Activated naive CD4-positive, alpha-beta T cell treated with anti-CD3 and anti-CD28 coated beads, Interleukin-2, amount 10 ng/mL, durations not matched to agents 7 days and 5 days (primary cell): ENCODE measurements at regions of chr6 and their contacts with region 1.

Region 1: DNA sequence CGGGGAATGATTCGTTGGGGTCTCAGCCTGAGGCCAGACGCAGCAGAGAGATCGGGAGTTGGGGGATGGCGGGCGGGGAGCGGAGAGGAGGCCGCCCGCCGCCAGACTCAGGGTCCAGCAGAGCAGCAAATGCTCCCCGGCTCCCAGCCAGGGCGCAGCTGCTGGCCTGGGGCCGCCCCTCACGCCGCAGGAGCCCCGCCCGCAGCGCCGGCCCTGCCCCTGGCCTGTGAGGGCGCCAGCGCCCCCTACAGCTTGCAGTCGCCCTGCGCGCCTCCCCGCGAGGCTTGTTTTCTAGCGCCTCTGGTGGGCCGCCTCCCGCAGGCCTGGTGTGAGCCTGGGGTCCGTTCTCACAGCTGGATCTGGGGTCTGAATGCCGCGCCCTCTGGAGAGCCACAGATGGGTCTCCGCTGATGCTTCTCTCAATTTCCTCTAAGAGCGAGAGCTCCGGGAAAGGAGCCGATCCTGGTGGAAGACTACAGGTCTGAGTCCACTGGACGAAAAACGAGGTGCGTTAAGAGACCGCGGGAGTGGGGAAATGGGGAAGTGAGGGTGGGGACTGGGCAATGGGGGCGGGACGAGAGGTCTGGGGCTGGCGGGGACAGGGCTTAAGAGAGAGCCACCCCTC is 29.9 kb downstream of the TRIM38 start:
- DNase-seq: peak; percentile 94
- H3K4me3 Mint-ChIP-seq: peak overlapping the region; percentile 83
- H3K27ac Mint-ChIP-seq: peak overlapping the region; percentile 88
- H3K4me1 Mint-ChIP-seq: peaks cover 27% of the 10 kb centered on the region
- H3K27me3 Mint-ChIP-seq: no peaks in the 10 kb centered on the region

Region 2: DNA sequence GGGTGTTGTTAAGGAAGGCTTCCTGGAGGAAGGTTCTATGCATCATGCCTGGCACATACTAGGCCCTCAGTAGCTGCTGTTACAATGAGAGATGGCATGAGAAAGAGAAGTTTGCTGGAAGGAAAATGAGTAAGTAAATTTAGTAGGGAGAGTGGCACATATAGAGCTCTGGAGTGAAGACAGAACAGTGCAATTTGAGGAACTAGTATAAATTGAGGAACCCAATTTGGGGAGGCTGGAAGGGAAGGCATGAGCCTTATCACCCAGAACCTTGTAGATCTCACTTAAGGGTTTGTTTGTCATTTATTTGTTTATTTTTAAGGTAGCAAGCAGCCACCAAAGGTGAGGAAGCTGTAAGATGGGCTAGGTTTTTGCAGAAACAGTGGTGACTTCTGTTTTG is 427.6 kb before region 1 on chr6:
- CTCF ChIA-PET with region 1: no interaction called
- DNase-seq: no peak
- H3K4me3 Mint-ChIP-seq: no peak overlapping the region
- H3K27ac Mint-ChIP-seq: no peak overlapping the region
- H3K4me1 Mint-ChIP-seq: no peaks in the 10 kb centered on the region
- H3K27me3 Mint-ChIP-seq: no peaks in the 10 kb centered on the region

Region 3: GRCh38 chr6:25788305-25788922 is 204.1 kb before region 1 on chr6:
- CTCF ChIA-PET with region 1: interaction called, 26 read pairs
- DNase-seq: peak; percentile 63
- H3K4me3 Mint-ChIP-seq: no peak overlapping the region
- H3K27ac Mint-ChIP-seq: no peak overlapping the region
- H3K4me1 Mint-ChIP-seq: no peaks in the 10 kb centered on the region
- H3K27me3 Mint-ChIP-seq: peaks cover 5% of the 10 kb centered on the region

Region 4: GRCh38 chr6:25966711-25967110 is 25.8 kb before region 1 on chr6:
- CTCF ChIA-PET with region 1: interaction called, 13 read pairs
- DNase-seq: no peak
- H3K4me3 Mint-ChIP-seq: peak overlapping the region; percentile 61
- H3K27ac Mint-ChIP-seq: no peak overlapping the region
- H3K4me1 Mint-ChIP-seq: peaks cover 72% of the 10 kb centered on the region
- H3K27me3 Mint-ChIP-seq: no peaks in the 10 kb centered on the region

Region 5: GRCh38 chr6:25981568-25982263 is 10.8 kb before region 1 on chr6:
- CTCF ChIA-PET with region 1: interaction called, 11 read pairs
- DNase-seq: no peak
- H3K4me3 Mint-ChIP-seq: no peak overlapping the region
- H3K27ac Mint-ChIP-seq: no peak overlapping the region
- H3K4me1 Mint-ChIP-seq: no peaks in the 10 kb centered on the region
- H3K27me3 Mint-ChIP-seq: no peaks in the 10 kb centered on the region

Region 6: DNA sequence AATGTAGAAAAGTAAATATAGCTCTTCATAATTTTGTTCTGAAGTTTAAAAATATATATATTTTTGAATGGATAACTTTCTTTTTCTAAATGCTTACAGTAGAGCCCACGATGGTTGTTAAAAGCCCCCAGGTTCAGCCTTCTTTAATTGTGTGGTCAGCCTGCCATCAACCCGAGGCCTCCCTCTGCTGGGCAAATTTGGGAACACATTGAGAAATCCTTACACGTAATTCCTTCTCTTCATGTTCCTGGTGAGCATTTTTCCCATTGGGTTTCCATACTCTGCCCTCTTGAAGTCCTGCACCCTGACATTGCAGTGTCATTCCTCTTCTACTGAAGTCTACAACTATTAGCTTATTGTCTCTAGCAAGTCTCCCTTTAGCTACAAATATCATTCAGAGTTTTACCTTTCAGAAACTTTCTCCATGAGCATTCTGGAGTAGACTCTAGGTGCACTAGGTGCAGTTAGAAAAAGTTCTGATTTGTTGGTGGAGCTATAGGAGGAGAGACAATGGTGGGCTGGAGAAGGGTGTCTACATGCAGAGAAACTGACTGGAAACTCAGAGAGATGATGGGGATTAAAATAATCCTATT is 10.7 kb after region 1 on chr6:
- CTCF ChIA-PET with region 1: interaction called, 79 read pairs
- DNase-seq: peak; percentile 65
- H3K4me3 Mint-ChIP-seq: no peak overlapping the region
- H3K27ac Mint-ChIP-seq: no peak overlapping the region
- H3K4me1 Mint-ChIP-seq: peaks cover 9% of the 10 kb centered on the region
- H3K27me3 Mint-ChIP-seq: no peaks in the 10 kb centered on the region

Region 7: GRCh38 chr6:26012061-26012460 is 19.5 kb after region 1 on chr6:
- CTCF ChIA-PET with region 1: interaction called, 79 read pairs
- DNase-seq: no peak
- H3K4me3 Mint-ChIP-seq: no peak overlapping the region
- H3K27ac Mint-ChIP-seq: no peak overlapping the region
- H3K4me1 Mint-ChIP-seq: peaks cover 5% of the 10 kb centered on the region
- H3K27me3 Mint-ChIP-seq: no peaks in the 10 kb centered on the region

Region 8: GRCh38 chr6:26017632-26017966 is 25.1 kb after region 1 on chr6:
- CTCF ChIA-PET with region 1: interaction called, 17 read pairs
- DNase-seq: peak; percentile 84
- H3K4me3 Mint-ChIP-seq: peak overlapping the region; percentile 66
- H3K27ac Mint-ChIP-seq: peak overlapping the region; percentile 95
- H3K4me1 Mint-ChIP-seq: peaks cover 43% of the 10 kb centered on the region
- H3K27me3 Mint-ChIP-seq: no peaks in the 10 kb centered on the region